Left cardiac atrium (tissue), 4 donors: ENCODE measurements at regions of chr5 and their contacts with region 1.

Region 1: GRCh38 chr5:81851481-81852178 is 100.7 kb upstream of the SSBP2 start:
- DNase-seq: peak; percentile 95
- ATAC-seq: peak; percentile 89 to 94

Region 2: GRCh38 chr5:81425569-81425968 is 426.1 kb before region 1 on chr5:
- intact Hi-C with region 1: loop called in 1 of 2 experiments (anchors 10 kb)
- DNase-seq: no peak
- ATAC-seq: peak; percentile 47 to 48

Region 3: DNA sequence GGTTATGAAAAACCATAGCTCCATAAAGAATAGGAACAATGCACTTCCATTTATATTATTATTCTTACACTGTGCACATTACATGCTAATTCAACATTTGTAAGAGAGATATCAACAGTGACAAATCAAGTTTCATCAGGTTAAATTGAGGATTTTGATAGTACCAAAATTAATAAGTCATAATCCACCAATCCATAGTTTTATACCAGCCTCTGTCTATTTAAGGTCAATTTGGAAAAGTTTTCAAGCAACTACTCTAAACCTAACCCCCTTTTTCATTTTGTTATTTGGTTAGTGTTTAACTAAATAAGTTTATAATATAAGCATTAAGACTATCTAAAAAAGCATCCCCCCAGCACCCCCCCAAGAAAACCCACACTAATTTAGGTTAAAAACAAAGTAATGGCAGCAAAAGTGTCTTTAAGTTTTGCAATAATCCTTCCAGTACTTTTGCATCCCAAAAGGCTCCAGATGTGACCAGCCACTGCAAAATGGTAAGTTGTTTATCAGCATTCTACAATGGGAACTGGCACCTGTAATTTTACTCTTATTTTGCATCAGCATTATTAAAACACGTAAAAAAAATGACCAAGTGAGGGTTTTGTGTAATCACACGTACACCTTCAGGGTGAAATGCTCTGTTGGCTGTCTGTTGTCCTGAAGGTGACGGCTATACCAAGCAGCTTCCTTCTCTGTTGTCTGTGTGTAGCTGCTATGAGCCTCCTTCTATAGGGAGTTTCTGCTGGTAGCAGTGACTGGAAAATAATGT is 64.0 kb before region 1 on chr5:
- intact Hi-C with region 1: loop called in 1 of 2 experiments (anchors 2 kb)
- DNase-seq: peak; percentile 56
- ATAC-seq: peak; percentile 74 to 84

Region 4: DNA sequence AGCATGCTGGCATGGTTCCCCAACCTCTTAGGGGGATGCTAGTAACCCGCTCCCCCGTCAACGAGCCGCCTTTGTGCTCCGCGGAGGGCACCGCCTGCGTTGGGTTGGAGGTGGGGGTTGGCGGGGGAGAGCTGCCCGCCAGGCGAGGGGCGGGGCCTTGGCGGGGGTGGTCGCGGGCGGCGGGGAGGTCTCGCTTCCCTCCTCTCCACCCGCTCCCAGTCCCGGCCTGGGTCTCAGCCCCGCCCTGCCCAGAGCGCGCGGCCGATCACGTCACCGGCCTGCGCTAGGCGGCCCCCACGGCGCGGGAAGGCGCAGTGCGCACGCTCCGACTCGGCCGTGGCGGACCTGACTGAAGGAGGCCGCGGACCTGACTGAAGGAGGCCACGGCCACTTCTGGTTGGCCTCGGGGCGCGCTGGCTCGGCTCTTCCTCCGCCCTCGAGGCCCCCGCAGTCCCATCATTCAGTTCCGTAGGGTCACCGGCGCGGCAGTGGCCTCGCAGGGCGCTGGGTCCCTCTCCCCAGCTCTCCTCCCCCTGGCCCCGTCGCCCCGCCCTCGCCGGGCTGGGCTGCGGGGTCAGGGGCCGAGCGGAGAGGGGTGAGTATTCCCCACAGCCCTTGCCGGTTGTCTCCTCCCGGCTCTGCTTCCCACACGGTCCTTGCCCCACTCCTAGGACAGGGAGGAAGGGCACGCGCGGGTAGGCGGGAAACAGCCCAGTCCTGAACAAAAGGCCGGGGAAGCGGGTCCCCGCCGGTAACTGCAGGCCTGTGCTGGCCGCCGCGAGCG is 120.3 kb after region 1 on chr5 and contains the start of gene ATG10:
- intact Hi-C with region 1: loop called in 1 of 2 experiments (anchors 5 kb)
- DNase-seq: peak; percentile 92
- ATAC-seq: peak; percentile 99 to 100
- total RNA-seq, gene ATG10: 5.1 to 6.2 TPM